ENCODE measurements at regions of chr1 and their contacts with region 1.

Region 1: DNA sequence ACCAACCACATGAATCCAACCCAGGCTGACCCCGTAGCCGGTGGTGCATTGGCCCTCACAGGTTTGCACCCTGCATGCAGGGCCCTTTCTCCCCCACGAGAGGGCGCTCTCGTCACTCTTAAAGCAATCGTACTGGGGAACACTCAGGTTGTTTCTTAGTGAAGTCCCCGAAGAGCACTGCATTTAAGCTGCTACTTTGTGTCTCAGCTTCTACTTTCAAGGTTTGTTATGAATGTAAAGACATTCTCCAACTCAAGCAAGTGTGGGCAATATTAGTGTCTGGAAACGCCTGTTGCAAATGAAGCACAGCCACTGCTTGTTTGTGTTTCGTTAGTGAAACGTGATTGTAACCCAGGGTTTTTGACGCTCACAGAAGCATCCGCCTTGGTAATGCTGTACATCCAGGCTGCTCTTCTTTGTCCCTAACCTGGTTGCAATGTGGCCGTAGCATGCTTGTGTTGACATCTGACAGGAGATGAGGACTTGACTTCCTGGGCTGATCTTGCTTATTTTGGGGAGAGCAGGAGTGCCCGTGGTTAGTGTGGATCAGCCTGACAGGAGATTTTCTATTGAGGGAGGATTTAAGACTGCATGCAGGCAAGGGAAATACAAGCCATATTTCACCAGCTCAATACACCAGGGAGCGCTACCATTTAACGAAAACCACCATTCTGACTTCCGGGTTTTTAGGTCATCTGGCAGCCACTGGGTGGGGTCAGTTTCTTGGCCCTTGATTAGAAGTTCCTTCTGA is 79.8 kb downstream of the ST6GALNAC3 start:
- DNase-seq: peak; percentile 64 to 86 (median 76)
- ATAC-seq: peak; percentile 93
- H3K4me3 ChIP-seq: peak overlapping the region; percentile 59
- H3K4me3 Mint-ChIP-seq: peak overlapping the region; percentile 85
- H3K27ac ChIP-seq: peak overlapping the region in 1 of 2 donors; percentile 52
- H3K27ac Mint-ChIP-seq: peak overlapping the region; percentile 67
- H3K4me1 ChIP-seq: peaks cover 9% of the 10 kb centered on the region
- H3K4me1 Mint-ChIP-seq: peaks cover 12% of the 10 kb centered on the region
- H3K27me3 ChIP-seq: no peaks in the 10 kb centered on the region
- H3K27me3 Mint-ChIP-seq: peaks cover 5% of the 10 kb centered on the region
- CTCF ChIP-seq: peak; percentile 90

Region 2: GRCh38 chr1:74748960-74749359 is 1405.4 kb before region 1 on chr1:
- CTCF ChIA-PET with region 1: no interaction called
- POLR2A ChIA-PET with region 1: no interaction called
- intact Hi-C with region 1: no loop called
- DNase-seq: no peak
- ATAC-seq: no peak
- H3K4me3 ChIP-seq: no peak overlapping the region
- H3K4me3 Mint-ChIP-seq: no peak overlapping the region
- H3K27ac ChIP-seq: no peak overlapping the region
- H3K27ac Mint-ChIP-seq: no peak overlapping the region
- H3K4me1 ChIP-seq: no peaks in the 10 kb centered on the region
- H3K4me1 Mint-ChIP-seq: no peaks in the 10 kb centered on the region
- H3K27me3 ChIP-seq: no peaks in the 10 kb centered on the region
- H3K27me3 Mint-ChIP-seq: no peaks in the 10 kb centered on the region
- CTCF ChIP-seq: no peak

Region 3: GRCh38 chr1:75991497-75992114 is 162.8 kb before region 1 on chr1:
- CTCF ChIA-PET with region 1: no interaction called
- POLR2A ChIA-PET with region 1: no interaction called
- intact Hi-C with region 1: loop called in 1 of 2 experiments (anchors 10 kb)
- DNase-seq: peak; percentile 45 to 84 (median 64)
- ATAC-seq: peak; percentile 56
- H3K4me3 ChIP-seq: no peak overlapping the region
- H3K4me3 Mint-ChIP-seq: no peak overlapping the region
- H3K27ac ChIP-seq: no peak overlapping the region
- H3K27ac Mint-ChIP-seq: no peak overlapping the region
- H3K4me1 ChIP-seq: no peaks in the 10 kb centered on the region
- H3K4me1 Mint-ChIP-seq: no peaks in the 10 kb centered on the region
- H3K27me3 ChIP-seq: peaks cover 0 to 3% of the 10 kb centered on the region in 2 experiments
- H3K27me3 Mint-ChIP-seq: no peaks in the 10 kb centered on the region
- CTCF ChIP-seq: peak; percentile 83

Region 4: GRCh38 chr1:76547916-76548315 is 393.5 kb after region 1 on chr1:
- CTCF ChIA-PET with region 1: no interaction called
- POLR2A ChIA-PET with region 1: no interaction called
- intact Hi-C with region 1: loop called in 1 of 2 experiments (anchors 10 kb)
- DNase-seq: no peak
- ATAC-seq: no peak
- H3K4me3 ChIP-seq: no peak overlapping the region
- H3K4me3 Mint-ChIP-seq: no peak overlapping the region
- H3K27ac ChIP-seq: no peak overlapping the region
- H3K27ac Mint-ChIP-seq: no peak overlapping the region
- H3K4me1 ChIP-seq: no peaks in the 10 kb centered on the region
- H3K4me1 Mint-ChIP-seq: no peaks in the 10 kb centered on the region
- H3K27me3 ChIP-seq: no peaks in the 10 kb centered on the region
- H3K27me3 Mint-ChIP-seq: no peaks in the 10 kb centered on the region
- CTCF ChIP-seq: no peak

Region 5: GRCh38 chr1:77126307-77126706 is 971.9 kb after region 1 on chr1:
- CTCF ChIA-PET with region 1: interaction called, 8 read pairs
- POLR2A ChIA-PET with region 1: no interaction called
- intact Hi-C with region 1: loop called (anchors 1 to 5 kb)
- DNase-seq: peak in 5 of 14 experiments; percentile 7 to 64 (median 52)
- ATAC-seq: peak; percentile 76
- H3K4me3 ChIP-seq: no peak overlapping the region
- H3K4me3 Mint-ChIP-seq: no peak overlapping the region
- H3K27ac ChIP-seq: no peak overlapping the region
- H3K27ac Mint-ChIP-seq: no peak overlapping the region
- H3K4me1 ChIP-seq: no peaks in the 10 kb centered on the region
- H3K4me1 Mint-ChIP-seq: no peaks in the 10 kb centered on the region
- H3K27me3 ChIP-seq: no peaks in the 10 kb centered on the region
- H3K27me3 Mint-ChIP-seq: no peaks in the 10 kb centered on the region
- CTCF ChIP-seq: no peak

Region 6: GRCh38 chr1:77533660-77534305 is 1379.4 kb after region 1 on chr1:
- CTCF ChIA-PET with region 1: no interaction called
- POLR2A ChIA-PET with region 1: no interaction called
- intact Hi-C with region 1: loop called (anchors 2 kb)
- DNase-seq: peak; percentile 37 to 80 (median 55)
- ATAC-seq: peak; percentile 66
- H3K4me3 ChIP-seq: no peak overlapping the region
- H3K4me3 Mint-ChIP-seq: peak overlapping the region; percentile 17
- H3K27ac ChIP-seq: no peak overlapping the region
- H3K27ac Mint-ChIP-seq: peak overlapping the region; percentile 13
- H3K4me1 ChIP-seq: peaks cover 13% of the 10 kb centered on the region
- H3K4me1 Mint-ChIP-seq: peaks cover 7% of the 10 kb centered on the region
- H3K27me3 ChIP-seq: no peaks in the 10 kb centered on the region
- H3K27me3 Mint-ChIP-seq: no peaks in the 10 kb centered on the region
- CTCF ChIP-seq: peak; percentile 91